Activated B cell treated with CpG ODN at 0.5 μM for 24 hours (primary cell): ENCODE measurements at regions of chr3 and their contacts with region 1.

Region 1: GRCh38 chr3:98817547-98818041 is 54.5 kb downstream of the ST3GAL6 start:
- DNase-seq: no peak
- ATAC-seq: peak; percentile 68
- H3K4me3 Mint-ChIP-seq: no peak overlapping the region
- H3K27ac Mint-ChIP-seq: no peak overlapping the region
- H3K4me1 Mint-ChIP-seq: no peaks in the 10 kb centered on the region
- H3K27me3 Mint-ChIP-seq: no peaks in the 10 kb centered on the region
- CTCF ChIP-seq: peak; percentile 20

Region 2: GRCh38 chr3:98039322-98040024 is 778.1 kb before region 1 on chr3:
- CTCF ChIA-PET with region 1: interaction called, 5 read pairs
- POLR2A ChIA-PET with region 1: no interaction called
- intact Hi-C with region 1: loop called (anchors 1 kb)
- DNase-seq: peak; percentile 36
- ATAC-seq: peak; percentile 99
- H3K4me3 Mint-ChIP-seq: peak overlapping the region; percentile 80
- H3K27ac Mint-ChIP-seq: peak overlapping the region; percentile 41
- H3K4me1 Mint-ChIP-seq: peaks cover 5% of the 10 kb centered on the region
- H3K27me3 Mint-ChIP-seq: peaks cover 5% of the 10 kb centered on the region
- CTCF ChIP-seq: peak; percentile 60

Region 3: DNA sequence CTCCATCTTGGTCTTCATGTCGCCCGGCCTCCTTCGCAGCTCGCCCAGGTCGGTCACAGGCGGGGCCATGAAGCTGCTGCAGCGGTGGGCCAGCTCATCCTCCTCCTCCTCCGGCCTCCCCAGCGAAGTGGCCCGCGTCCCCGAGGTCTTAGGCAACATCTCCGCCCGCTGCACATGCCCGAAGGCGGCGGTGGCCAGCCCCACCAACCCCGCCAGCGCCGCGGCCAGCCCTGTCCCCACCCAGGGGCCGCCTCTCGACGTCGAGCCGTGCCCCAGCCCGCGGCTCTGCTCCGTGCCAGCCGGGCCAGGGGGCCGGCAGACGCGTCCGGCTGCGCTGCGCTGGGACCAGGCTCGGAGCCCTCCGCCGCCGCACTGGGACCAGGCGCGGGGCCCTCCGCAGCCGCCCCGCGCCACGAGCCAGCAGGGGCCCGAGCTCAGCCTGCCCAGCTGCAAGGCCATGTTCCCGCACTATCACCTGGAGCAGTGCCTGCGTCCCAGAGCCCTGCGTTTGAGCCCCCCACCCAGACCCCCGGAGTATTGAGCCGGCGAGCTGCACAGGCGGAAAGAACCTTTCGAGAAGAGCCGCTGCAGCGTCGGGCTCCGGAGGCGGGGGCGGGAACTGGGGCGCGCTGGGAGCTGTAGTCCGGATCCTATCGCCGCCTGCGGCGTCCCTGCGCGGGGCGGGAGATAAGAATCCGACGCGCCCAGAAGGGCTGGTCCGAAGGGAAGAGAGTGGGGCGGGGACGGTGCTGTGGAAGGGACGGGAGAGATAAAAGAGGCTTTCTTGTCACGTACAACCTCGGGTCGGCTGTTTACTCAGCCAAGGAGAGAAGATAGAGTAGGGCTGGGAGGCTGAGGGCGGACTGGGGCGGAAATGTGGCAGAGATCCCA is 224.3 kb before region 1 on chr3 and contains the start of gene CPOX:
- CTCF ChIA-PET with region 1: interaction called, 5 read pairs
- POLR2A ChIA-PET with region 1: no interaction called
- intact Hi-C with region 1: loop called (anchors 1 kb)
- DNase-seq: peak; percentile 70
- ATAC-seq: peak; percentile 95
- H3K4me3 Mint-ChIP-seq: peak within 1 kb of the TSS; percentile 97
- H3K27ac Mint-ChIP-seq: peak within 1 kb of the TSS; percentile 91
- H3K4me1 Mint-ChIP-seq: peaks cover 33% of the 10 kb centered on the region
- H3K27me3 Mint-ChIP-seq: no peaks in the 10 kb centered on the region
- CTCF ChIP-seq: no peak
- total RNA-seq, gene CPOX: 17.3 and 17.5 TPM in 2 replicates

Region 4: DNA sequence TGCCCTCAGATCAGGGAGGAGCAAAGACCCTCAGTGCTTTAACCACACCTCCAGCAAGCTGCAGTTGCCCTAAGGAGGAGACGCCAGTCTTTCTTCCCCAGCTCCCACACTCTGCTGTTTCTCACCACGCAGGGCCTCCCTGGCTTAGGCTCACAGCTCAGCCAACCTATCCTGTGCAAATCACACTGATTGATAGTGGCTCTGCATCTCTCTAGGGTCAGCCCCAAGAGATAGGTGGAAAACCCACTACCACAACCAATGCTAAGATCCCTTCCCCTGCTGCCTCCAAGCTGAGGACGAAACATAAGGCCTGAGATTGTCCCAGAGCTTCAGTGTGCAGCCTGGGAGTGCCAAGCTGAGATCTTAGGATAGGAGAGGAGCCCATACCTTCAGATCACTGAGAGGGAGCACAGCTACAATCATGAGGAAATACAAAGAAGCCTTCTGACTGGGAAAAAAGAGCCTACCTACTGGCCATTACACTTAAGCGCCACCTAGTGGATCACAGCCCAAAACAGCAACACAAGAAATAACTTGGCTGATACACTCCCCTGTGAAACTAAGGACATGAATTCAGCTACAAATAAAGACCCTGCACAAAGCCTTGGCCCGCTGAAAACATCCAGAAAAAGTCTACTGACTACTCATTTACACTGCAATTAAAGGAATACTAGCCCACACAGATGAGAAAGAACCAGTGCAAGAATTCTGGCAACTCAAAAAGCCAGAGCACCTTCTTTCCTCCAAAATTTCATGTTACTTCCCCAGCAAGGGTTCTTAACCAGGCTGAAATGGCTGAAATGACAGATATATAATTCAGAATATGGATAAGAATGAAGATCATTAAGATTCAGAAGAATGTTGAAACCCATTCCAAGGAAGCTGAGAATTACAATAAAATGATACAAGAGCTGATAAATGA is 355.4 kb after region 1 on chr3:
- CTCF ChIA-PET with region 1: interaction called, 16 read pairs
- POLR2A ChIA-PET with region 1: no interaction called
- intact Hi-C with region 1: no loop called
- DNase-seq: no peak
- ATAC-seq: no peak
- H3K4me3 Mint-ChIP-seq: no peak overlapping the region
- H3K27ac Mint-ChIP-seq: no peak overlapping the region
- H3K4me1 Mint-ChIP-seq: no peaks in the 10 kb centered on the region
- H3K27me3 Mint-ChIP-seq: no peaks in the 10 kb centered on the region
- CTCF ChIP-seq: no peak

Region 5: GRCh38 chr3:99686955-99687612 is 869.5 kb after region 1 on chr3:
- CTCF ChIA-PET with region 1: no interaction called
- POLR2A ChIA-PET with region 1: no interaction called
- intact Hi-C with region 1: loop called (anchors 1 kb)
- DNase-seq: no peak
- ATAC-seq: no peak
- H3K4me3 Mint-ChIP-seq: no peak overlapping the region
- H3K27ac Mint-ChIP-seq: no peak overlapping the region
- H3K4me1 Mint-ChIP-seq: no peaks in the 10 kb centered on the region
- H3K27me3 Mint-ChIP-seq: peaks cover 8% of the 10 kb centered on the region
- CTCF ChIP-seq: no peak